H1 (cell line): ENCODE measurements at regions of chr20 and their contacts with region 1.

Region 1: DNA sequence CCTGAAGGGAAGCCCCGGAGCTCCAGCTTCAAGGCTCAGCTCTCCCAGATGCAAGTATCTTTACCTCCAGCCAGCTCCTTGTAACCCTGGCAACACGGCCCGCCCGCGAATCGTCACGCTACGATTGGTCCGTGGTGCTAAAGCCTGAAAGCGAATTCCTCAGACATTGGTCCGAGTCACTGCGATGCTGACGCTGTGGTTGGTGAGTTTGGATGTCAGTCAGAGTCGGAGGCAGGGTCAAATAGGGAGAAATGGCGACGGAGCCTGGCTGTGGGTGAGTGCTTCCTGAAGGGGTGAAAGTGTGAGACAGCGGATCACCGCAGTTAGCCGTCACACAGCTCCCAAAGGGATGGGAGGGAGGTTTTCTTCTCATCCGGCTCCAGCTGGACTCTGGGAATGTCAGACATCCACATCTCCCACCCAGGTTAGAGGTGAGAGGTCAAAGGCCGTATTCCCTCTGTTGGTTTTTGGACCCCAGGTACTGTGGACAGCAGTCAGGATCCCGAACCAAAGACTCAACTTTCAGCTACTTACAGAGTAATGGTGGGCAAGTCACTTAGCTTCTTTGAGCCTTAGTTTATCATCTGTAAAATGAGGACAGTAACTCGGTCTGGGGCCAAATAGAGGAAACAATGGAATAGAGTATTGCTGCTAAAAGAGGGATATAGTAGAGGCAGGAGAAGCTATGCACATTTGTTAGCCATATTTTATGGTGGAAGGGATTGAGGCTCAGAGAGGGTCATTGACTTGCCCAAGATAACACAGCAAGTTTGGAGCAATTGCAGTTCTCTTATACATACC is at the start of gene ZSWIM1:
- DNase-seq: peak; percentile 98 to 99
- H3K4me3 ChIP-seq: peak within 1 kb of the TSS; percentile 80 to 99 (median 90)
- H3K27ac ChIP-seq: peak within 1 kb of the TSS; percentile 69
- H3K4me1 ChIP-seq: no peaks in the 10 kb centered on the region
- H3K27me3 ChIP-seq: no peaks in the 10 kb centered on the region
- CTCF ChIP-seq: no peak
- EP300 ChIP-seq: no peak
- POLR2A ChIP-seq: peak; percentile 61 to 88
- RAD21 ChIP-seq: no peak
- total RNA-seq, gene ZSWIM1: 15.6 and 16.7 TPM in 2 replicates

Region 2: DNA sequence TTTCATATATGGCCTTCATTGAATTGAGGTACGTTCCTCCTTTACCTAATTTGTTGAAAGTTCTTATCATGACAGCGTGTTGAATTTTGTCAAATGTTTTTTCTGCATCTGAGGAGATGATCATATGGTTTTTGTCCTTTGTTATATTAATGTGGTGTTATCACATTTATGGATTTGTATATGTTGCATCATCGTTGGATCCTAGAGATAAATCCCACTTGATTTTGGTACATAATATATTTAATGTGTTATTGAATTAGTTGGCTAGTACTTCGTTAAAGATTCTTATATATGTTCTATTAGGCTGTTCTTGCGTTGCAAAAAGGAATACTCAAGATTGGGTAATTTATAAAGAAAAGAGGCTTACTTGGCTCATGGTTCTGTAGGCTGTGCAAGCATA is 241.5 kb before region 1 on chr20:
- CTCF ChIA-PET with region 1: no interaction called
- POLR2A ChIA-PET with region 1: no interaction called
- DNase-seq: no peak
- H3K4me3 ChIP-seq: no peak overlapping the region
- H3K27ac ChIP-seq: no peak overlapping the region
- H3K4me1 ChIP-seq: no peaks in the 10 kb centered on the region
- H3K27me3 ChIP-seq: no peaks in the 10 kb centered on the region
- CTCF ChIP-seq: no peak
- EP300 ChIP-seq: no peak
- POLR2A ChIP-seq: no peak
- RAD21 ChIP-seq: no peak

Region 3: GRCh38 chr20:45823949-45824835 is 57.0 kb before region 1 on chr20:
- CTCF ChIA-PET with region 1: interaction called, 13 read pairs
- POLR2A ChIA-PET with region 1: interaction called, 3 read pairs
- DNase-seq: peak; percentile 53 to 77
- H3K4me3 ChIP-seq: peak overlapping the region in 3 of 4 experiments; percentile 5 to 44 (median 6); a peak in 4 of 8 replicates
- H3K27ac ChIP-seq: no peak overlapping the region
- H3K4me1 ChIP-seq: peaks cover 0 to 12% (median 5%) of the 10 kb centered on the region in 4 experiments; a peak in 6 of 7 replicates
- H3K27me3 ChIP-seq: peaks cover 0 to 12% (median 10%) of the 10 kb centered on the region in 4 experiments; a peak in 4 of 7 replicates
- CTCF ChIP-seq: peak; percentile 58 to 78 (median 72)
- EP300 ChIP-seq: no peak
- POLR2A ChIP-seq: 0 out of 3 replicates have a peak, but pooled peaks of 1 of the 2 experiments have one; percentile 42
- RAD21 ChIP-seq: peak; percentile 74 to 77

Region 4: GRCh38 chr20:45857114-45857881 is 23.9 kb before region 1 on chr20 and contains the starts of genes ACOT8 and ZSWIM3:
- CTCF ChIA-PET with region 1: no interaction called
- POLR2A ChIA-PET with region 1: interaction called, 35 read pairs
- DNase-seq: peak; percentile 90 to 96
- H3K4me3 ChIP-seq: peak within 1 kb of the TSS; percentile 69 to 94 (median 77)
- H3K27ac ChIP-seq: peak within 1 kb of the TSS; percentile 49; the same call in 1 of the 2 replicates
- H3K4me1 ChIP-seq: peaks cover 10 to 16% (median 13%) of the 10 kb centered on the region in 4 experiments
- H3K27me3 ChIP-seq: no peaks in the 10 kb centered on the region
- CTCF ChIP-seq: no peak
- EP300 ChIP-seq: no peak
- POLR2A ChIP-seq: peak in 1 of 2 experiments; percentile 47; a peak in 1 of 3 replicates
- RAD21 ChIP-seq: no peak
- total RNA-seq, gene ACOT8: 37.3 and 37.6 TPM in 2 replicates
- total RNA-seq, gene ZSWIM3: 6.8 and 6.9 TPM in 2 replicates

Region 5: DNA sequence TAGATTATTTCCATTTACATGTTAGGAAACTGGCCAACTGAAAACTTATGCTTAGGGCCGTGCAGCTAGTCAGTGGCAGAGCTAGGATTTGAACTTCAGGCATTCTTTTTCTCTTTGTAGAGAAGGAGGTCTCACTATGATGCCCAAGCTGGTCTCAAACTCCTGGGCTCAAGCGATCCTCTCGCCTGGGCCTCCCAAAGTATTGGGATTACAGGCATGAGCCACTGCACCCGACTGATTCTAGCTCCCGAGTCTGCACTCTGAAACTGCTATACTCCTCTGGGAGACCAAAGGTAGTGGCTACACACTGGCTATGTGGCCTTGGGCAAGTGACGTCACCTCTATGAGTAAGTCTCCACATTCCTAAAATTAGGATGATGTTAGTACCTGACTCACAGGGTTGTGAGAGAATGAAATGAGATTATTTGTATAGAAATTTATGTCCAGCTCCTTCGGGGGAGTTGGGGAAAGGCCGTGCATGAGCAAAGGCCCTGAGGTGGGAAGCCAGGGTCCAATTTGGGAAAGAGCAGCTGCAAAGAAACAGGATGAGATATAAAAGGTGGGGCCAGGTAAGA is 24.4 kb after region 1 on chr20:
- CTCF ChIA-PET with region 1: no interaction called
- POLR2A ChIA-PET with region 1: interaction called, 19 read pairs
- DNase-seq: no peak
- H3K4me3 ChIP-seq: no peak overlapping the region
- H3K27ac ChIP-seq: no peak overlapping the region
- H3K4me1 ChIP-seq: no peaks in the 10 kb centered on the region; a peak in 1 of 7 replicates
- H3K27me3 ChIP-seq: no peaks in the 10 kb centered on the region
- CTCF ChIP-seq: no peak
- EP300 ChIP-seq: no peak
- POLR2A ChIP-seq: no peak
- RAD21 ChIP-seq: no peak

Region 6: GRCh38 chr20:45971675-45972499 is 90.7 kb after region 1 on chr20 and contains the start of gene ZNF335:
- CTCF ChIA-PET with region 1: interaction called, 3 read pairs
- POLR2A ChIA-PET with region 1: interaction called, 10 read pairs
- DNase-seq: peak; percentile 88 to 96
- H3K4me3 ChIP-seq: peak within 1 kb of the TSS; percentile 67 to 99 (median 82)
- H3K27ac ChIP-seq: peak within 1 kb of the TSS; percentile 100
- H3K4me1 ChIP-seq: peaks cover 0 to 8% (median 2%) of the 10 kb centered on the region in 4 experiments; a peak in 4 of 7 replicates
- H3K27me3 ChIP-seq: no peaks in the 10 kb centered on the region
- CTCF ChIP-seq: peak in 1 of 3 experiments; percentile 18; a peak in 1 of 4 replicates
- EP300 ChIP-seq: peak in 1 of 2 experiments; percentile 99; a peak in 2 of 3 replicates
- POLR2A ChIP-seq: peak in 1 of 2 experiments; percentile 88; a peak in 2 of 3 replicates
- RAD21 ChIP-seq: no peak
- total RNA-seq, gene ZNF335: 14.6 and 15.9 TPM in 2 replicates